Activated CD4-positive, alpha-beta T cell treated with anti-CD3 and anti-CD28 coated beads for 36 hours (primary cell): ENCODE measurements at regions of chr5 and their contacts with region 1.

Region 1: GRCh38 chr5:157130925-157131324 is 11.7 kb downstream of the MED7 start:
- DNase-seq: no peak
- ATAC-seq: no peak
- H3K4me3 Mint-ChIP-seq: no peak overlapping the region
- H3K27ac Mint-ChIP-seq: no peak overlapping the region
- H3K4me1 Mint-ChIP-seq: peaks cover 26% of the 10 kb centered on the region
- H3K27me3 Mint-ChIP-seq: no peaks in the 10 kb centered on the region

Region 2: GRCh38 chr5:155136216-155136850 is 1994.6 kb before region 1 on chr5:
- CTCF ChIA-PET with region 1: no interaction called
- POLR2A ChIA-PET with region 1: no interaction called
- intact Hi-C with region 1: loop called in 1 of 2 experiments (anchors 10 kb)
- DNase-seq: no peak
- ATAC-seq: no peak
- H3K4me3 Mint-ChIP-seq: no peak overlapping the region
- H3K27ac Mint-ChIP-seq: no peak overlapping the region
- H3K4me1 Mint-ChIP-seq: no peaks in the 10 kb centered on the region
- H3K27me3 Mint-ChIP-seq: peaks cover 28% of the 10 kb centered on the region

Region 3: GRCh38 chr5:155943516-155944407 is 1187.2 kb before region 1 on chr5:
- CTCF ChIA-PET with region 1: interaction called, 4 read pairs
- POLR2A ChIA-PET with region 1: no interaction called
- intact Hi-C with region 1: loop called (anchors 2 kb)
- DNase-seq: peak; percentile 58
- ATAC-seq: peak; percentile 58
- H3K4me3 Mint-ChIP-seq: no peak overlapping the region
- H3K27ac Mint-ChIP-seq: no peak overlapping the region
- H3K4me1 Mint-ChIP-seq: no peaks in the 10 kb centered on the region
- H3K27me3 Mint-ChIP-seq: peaks cover 10% of the 10 kb centered on the region

Region 4: DNA sequence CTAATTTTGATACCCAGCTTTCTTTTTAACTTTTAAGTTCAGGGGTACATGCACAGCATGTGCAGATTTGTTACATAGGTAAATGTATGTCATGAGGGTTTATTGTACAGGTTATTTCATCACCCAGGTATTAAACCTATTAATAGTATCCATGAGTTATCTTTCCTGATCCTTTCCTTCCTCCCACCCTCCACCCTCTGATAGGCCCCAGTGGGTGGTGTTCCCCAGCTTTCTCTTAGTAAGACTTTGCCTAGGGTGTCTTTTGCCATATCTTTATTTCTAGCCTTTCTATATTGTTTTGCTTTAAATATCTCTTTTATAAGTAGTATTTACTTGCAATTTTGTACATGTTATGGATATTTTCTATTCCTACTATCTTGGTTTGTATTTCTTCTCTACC is 560.3 kb before region 1 on chr5:
- CTCF ChIA-PET with region 1: no interaction called
- POLR2A ChIA-PET with region 1: no interaction called
- intact Hi-C with region 1: no loop called
- DNase-seq: no peak
- ATAC-seq: no peak
- H3K4me3 Mint-ChIP-seq: no peak overlapping the region
- H3K27ac Mint-ChIP-seq: no peak overlapping the region
- H3K4me1 Mint-ChIP-seq: no peaks in the 10 kb centered on the region
- H3K27me3 Mint-ChIP-seq: no peaks in the 10 kb centered on the region

Region 5: GRCh38 chr5:156582193-156582598 is 548.7 kb before region 1 on chr5:
- CTCF ChIA-PET with region 1: no interaction called
- POLR2A ChIA-PET with region 1: no interaction called
- intact Hi-C with region 1: no loop called
- DNase-seq: no peak
- ATAC-seq: no peak
- H3K4me3 Mint-ChIP-seq: no peak overlapping the region
- H3K27ac Mint-ChIP-seq: no peak overlapping the region
- H3K4me1 Mint-ChIP-seq: no peaks in the 10 kb centered on the region
- H3K27me3 Mint-ChIP-seq: peaks cover 29% of the 10 kb centered on the region

Region 6: GRCh38 chr5:156835905-156836304 is 295.0 kb before region 1 on chr5:
- CTCF ChIA-PET with region 1: no interaction called
- POLR2A ChIA-PET with region 1: no interaction called
- intact Hi-C with region 1: loop called (anchors 5 to 10 kb)
- DNase-seq: peak; percentile 6
- ATAC-seq: peak; percentile 51
- H3K4me3 Mint-ChIP-seq: no peak overlapping the region
- H3K27ac Mint-ChIP-seq: no peak overlapping the region
- H3K4me1 Mint-ChIP-seq: peaks cover 3% of the 10 kb centered on the region
- H3K27me3 Mint-ChIP-seq: peaks cover 3% of the 10 kb centered on the region

Region 7: GRCh38 chr5:157026789-157027424 is 104.0 kb before region 1 on chr5:
- CTCF ChIA-PET with region 1: interaction called, 5 read pairs
- POLR2A ChIA-PET with region 1: no interaction called
- intact Hi-C with region 1: loop called (anchors 2 to 5 kb)
- DNase-seq: peak; percentile 32
- ATAC-seq: no peak
- H3K4me3 Mint-ChIP-seq: no peak overlapping the region
- H3K27ac Mint-ChIP-seq: no peak overlapping the region
- H3K4me1 Mint-ChIP-seq: peaks cover 36% of the 10 kb centered on the region
- H3K27me3 Mint-ChIP-seq: no peaks in the 10 kb centered on the region

Region 8: GRCh38 chr5:157142317-157143126 is 11.6 kb after region 1 on chr5 and contains the start of gene MED7:
- CTCF ChIA-PET with region 1: interaction called, 16 read pairs
- POLR2A ChIA-PET with region 1: interaction called, 6 read pairs
- intact Hi-C with region 1: no loop called
- DNase-seq: peak; percentile 95
- ATAC-seq: peak; percentile 98
- H3K4me3 Mint-ChIP-seq: peak within 1 kb of the TSS; percentile 84
- H3K27ac Mint-ChIP-seq: peak within 1 kb of the TSS; percentile 99
- H3K4me1 Mint-ChIP-seq: peaks cover 46% of the 10 kb centered on the region
- H3K27me3 Mint-ChIP-seq: no peaks in the 10 kb centered on the region
- total RNA-seq, gene MED7: 10.0 to 16.9 TPM